Activated CD4-positive, alpha-beta T cell treated with anti-CD3 and anti-CD28 coated beads, Interleukin-2, amount 10 ng/mL, durations not matched to agents 24 days and 14 days (primary cell): ENCODE measurements at regions of chr2 and their contacts with region 1.

Region 1: DNA sequence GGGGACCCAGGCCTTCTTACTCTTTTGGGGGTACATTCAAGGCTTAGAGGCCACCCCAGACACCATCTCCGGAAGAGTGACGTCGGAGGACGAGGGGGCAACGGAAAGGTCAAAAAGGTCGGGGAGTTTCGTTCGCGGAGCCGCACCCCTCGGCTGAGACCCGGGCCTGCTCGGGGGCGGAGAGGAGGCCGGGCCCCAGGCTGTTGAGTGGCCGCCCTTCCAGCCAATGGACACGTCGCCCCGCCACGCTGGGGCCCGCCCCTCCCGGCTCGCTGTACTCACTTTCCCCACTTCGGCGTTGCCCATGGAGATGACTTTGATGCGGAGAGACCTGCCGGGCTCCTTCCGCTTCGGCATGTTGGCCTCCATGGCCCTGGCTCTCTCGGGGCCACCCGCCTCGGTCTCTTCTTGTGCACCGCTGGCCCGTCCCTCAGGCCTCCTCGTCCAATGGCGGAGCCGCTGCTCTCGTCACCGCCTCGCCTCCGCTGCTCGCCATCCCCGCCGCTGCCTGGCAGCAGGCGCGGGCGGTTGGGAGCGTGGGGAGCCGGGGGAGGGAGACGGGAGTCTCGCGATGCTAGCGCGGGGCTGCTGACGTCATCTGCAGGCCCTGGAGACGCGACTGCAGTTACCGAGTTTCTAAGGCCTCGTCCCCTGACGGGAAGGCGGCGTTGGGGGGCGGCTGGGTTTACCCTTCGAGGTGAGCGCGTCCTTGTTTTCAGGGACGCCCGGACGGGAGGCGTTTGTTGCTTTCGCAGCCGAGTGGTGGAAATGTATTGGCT is at the start of gene DNAJC27:
- DNase-seq: peak; percentile 99
- H3K4me3 Mint-ChIP-seq: peak within 1 kb of the TSS; percentile 96
- H3K27ac Mint-ChIP-seq: peak within 1 kb of the TSS; percentile 100
- H3K4me1 Mint-ChIP-seq: peaks cover 13% of the 10 kb centered on the region
- H3K27me3 Mint-ChIP-seq: no peaks in the 10 kb centered on the region
- total RNA-seq, gene DNAJC27: 6.9 and 7.0 TPM in 2 replicates

Region 2: DNA sequence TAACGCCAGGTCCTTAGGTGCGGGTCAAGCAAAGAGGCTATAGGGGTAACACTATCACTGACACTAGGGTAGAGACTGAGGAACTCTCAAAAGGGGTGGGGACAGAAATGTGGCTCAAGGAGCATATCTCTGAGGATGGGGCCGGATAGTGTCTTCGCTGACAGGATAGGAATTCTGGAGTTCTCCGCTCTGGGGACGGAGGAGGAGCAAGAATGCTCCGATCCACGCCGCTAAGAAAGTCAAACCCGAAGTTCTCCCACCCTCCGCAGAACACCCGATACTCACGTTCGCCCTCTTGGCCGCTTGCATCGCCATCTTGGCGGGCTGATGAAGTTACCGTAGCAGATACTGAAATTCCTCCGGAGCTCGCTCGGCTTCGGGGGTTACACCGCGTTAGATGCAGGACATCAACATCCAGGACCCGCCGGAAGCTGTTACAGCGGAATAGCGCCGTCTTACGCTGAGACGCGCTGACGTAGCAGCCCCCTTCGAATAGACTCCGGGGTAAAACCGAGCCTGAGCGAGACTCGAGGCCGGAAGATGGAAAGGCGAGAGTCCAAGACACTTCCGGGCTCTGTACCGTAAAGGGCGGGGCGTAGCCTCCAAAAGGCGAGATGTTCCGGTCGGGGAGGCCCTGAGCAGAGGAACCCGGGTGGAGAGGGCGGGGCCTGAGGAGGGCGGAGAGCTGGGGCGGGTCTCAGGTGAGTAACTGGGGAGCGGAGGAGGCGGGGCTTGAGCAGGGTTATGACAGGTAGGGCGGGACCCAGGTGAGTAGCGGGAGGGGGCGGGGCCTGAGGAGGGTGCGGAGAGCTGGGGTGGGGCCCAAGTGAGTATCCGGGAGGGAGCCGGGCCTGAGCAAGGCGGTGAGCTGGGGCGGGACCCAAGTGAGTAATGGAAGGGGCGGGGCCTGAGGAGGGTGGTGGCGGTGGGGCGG is 895.5 kb before region 1 on chr2 and contains the start of gene SF3B6:
- intact Hi-C with region 1: loop called (anchors 5 kb)
- DNase-seq: peak; percentile 100
- H3K4me3 Mint-ChIP-seq: peak within 1 kb of the TSS; percentile 95
- H3K27ac Mint-ChIP-seq: peak within 1 kb of the TSS; percentile 96
- H3K4me1 Mint-ChIP-seq: peaks cover 23% of the 10 kb centered on the region
- H3K27me3 Mint-ChIP-seq: no peaks in the 10 kb centered on the region
- total RNA-seq, gene SF3B6: 143 and 154 TPM in 2 replicates

Region 3: DNA sequence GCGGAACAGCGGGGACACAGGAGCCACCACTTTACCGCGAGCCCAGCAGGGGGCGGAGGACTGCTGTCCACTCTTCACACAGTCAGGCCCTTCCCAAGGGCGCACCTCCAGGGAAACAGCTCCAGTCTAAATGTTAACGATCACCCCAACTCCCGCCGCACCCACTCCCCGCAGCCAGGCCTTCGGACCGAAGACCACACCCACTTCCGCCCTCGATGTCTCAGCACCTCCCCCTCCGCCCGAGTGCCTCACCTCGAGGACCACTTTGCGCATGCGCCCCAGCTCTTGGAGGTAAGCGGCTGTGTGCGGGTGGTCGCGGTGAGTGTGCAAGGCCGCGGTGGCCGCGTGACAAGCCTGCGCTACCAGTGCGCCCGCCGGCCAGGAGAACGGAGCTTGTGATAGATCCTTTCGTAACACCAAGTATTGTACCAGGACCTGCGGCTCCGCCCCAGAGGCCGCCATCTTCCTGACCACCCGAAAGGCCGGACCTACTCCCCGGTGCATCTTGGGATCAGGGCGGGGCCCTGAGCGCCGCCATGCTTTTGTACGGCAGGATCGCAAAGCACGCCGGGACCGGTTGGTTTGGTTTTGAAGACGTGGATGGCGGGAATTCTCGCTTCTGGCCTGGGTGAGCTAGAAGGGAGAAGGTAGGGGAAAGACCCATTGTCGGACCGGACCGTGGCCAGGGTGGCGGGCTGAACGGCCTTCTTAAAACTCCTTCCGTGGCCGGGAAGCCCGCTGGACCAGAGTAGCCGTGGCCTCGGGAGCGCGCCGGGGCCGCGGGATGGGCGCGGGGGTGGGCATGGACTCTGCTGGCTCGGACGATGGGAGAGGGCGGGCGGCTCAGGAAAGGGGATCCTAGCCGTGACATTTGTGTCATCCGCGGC is 178.6 kb before region 1 on chr2 and contains the starts of genes CENPO and PTRHD1:
- intact Hi-C with region 1: loop called (anchors 2 kb)
- DNase-seq: peak; percentile 98
- H3K4me3 Mint-ChIP-seq: peak within 1 kb of the TSS; percentile 98
- H3K27ac Mint-ChIP-seq: peak within 1 kb of the TSS; percentile 99
- H3K4me1 Mint-ChIP-seq: peaks cover 37% of the 10 kb centered on the region
- H3K27me3 Mint-ChIP-seq: peaks cover 2% of the 10 kb centered on the region
- total RNA-seq, gene CENPO: 44.0 and 45.9 TPM in 2 replicates
- total RNA-seq, gene PTRHD1: 21.7 and 22.2 TPM in 2 replicates

Region 4: GRCh38 chr2:25041928-25042320 is 70.2 kb after region 1 on chr2 and contains the start of gene EFR3B:
- intact Hi-C with region 1: loop called (anchors 1 kb)
- DNase-seq: peak; percentile 96
- H3K4me3 Mint-ChIP-seq: peak within 1 kb of the TSS; percentile 84
- H3K27ac Mint-ChIP-seq: peak within 1 kb of the TSS; percentile 49
- H3K4me1 Mint-ChIP-seq: peaks cover 22% of the 10 kb centered on the region
- H3K27me3 Mint-ChIP-seq: peaks cover 48% of the 10 kb centered on the region
- total RNA-seq, gene EFR3B: 0.09 and 0.12 TPM in 2 replicates

Region 5: DNA sequence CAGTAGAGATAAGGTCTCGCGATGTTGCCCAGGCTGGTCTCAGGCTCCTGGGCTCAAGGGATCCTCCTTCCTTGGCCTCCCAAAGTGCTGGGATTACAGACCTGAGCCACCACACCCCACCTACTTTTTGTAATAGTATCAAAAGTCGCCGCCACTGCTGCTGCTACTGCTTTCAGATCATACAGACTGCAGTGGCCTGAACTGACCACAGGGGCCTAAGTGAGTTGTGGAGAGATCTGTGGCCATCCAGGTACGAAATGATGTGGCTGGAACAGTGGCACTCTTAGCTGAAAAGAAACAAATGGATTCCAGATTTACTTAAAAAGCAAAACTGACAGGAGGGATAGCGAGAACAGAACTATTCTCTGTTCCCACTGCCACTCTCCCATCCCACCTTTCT is 229.5 kb after region 1 on chr2:
- intact Hi-C with region 1: loop called (anchors 1 kb)
- DNase-seq: no peak
- H3K4me3 Mint-ChIP-seq: no peak overlapping the region
- H3K27ac Mint-ChIP-seq: no peak overlapping the region
- H3K4me1 Mint-ChIP-seq: peaks cover 5% of the 10 kb centered on the region
- H3K27me3 Mint-ChIP-seq: peaks cover 13% of the 10 kb centered on the region